AG04450 (cell line): ENCODE measurements at regions of chr1 and their contacts with region 1.

Region 1: DNA sequence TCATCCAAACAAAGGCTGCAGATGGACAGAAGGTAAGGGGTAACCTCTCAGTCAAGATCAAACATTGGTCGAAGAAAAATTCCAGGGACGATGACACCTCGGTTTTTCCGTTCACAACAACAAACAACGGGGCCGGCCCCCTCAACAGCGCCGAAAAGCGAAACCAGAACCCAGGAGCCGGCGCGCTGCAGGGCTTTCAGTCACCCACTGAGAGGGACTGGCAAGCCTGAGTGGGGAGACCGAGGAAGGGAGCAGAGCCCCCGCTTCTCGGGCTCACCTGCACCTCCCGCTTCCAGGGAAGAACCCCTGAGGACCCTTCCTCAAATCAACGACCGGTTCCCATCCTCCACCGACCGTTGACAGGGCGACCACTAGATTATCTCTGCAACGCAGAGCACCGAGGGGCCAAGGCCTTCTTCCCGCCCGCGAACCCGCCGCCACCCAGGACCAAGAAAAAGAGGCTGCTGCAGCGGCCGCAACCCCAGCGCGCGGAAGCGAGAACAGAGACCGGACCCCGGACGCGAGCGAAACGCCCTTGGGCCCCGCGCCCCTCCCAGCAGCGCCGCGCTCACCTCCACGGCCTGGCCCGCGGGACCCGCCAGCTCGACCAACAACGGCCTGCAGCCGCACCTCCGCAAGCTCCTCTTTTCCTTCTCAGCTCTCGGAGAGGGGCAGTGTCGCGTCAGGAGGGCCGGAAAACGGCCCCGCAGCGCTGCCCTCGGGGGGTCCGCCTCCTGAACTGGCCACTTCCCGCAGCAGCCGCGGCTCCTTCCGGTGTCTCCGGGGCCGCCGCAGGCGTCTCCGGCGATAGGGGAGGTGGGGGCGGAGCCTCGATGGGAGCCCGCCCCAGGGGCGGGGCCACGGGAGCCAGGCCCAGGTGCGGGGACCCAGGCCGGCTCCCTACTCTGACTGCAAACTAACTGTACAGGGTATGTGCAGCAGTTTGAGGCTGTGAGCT is at the start of gene USP33:
- DNase-seq: peak; percentile 7
- H3K4me3 ChIP-seq: peak within 1 kb of the TSS; percentile 88
- H3K27ac ChIP-seq: peak within 1 kb of the TSS; percentile 48
- H3K27me3 ChIP-seq: no peaks in the 10 kb centered on the region
- CTCF ChIP-seq: no peak
- polyA plus RNA-seq, gene USP33: 57.7 and 86.0 TPM in 2 replicates

Region 2: GRCh38 chr1:77794550-77794949 is 35.2 kb after region 1 on chr1:
- CTCF ChIA-PET with region 1: interaction called, 13 read pairs
- POLR2A ChIA-PET with region 1: no interaction called
- DNase-seq: no peak
- H3K4me3 ChIP-seq: no peak overlapping the region
- H3K27ac ChIP-seq: no peak overlapping the region
- H3K27me3 ChIP-seq: no peaks in the 10 kb centered on the region
- CTCF ChIP-seq: no peak